Endothelial cell of umbilical vein (primary cell): ENCODE measurements at regions of chr7 and their contacts with region 1.

Region 1: GRCh38 chr7:158863611-158864506 is 7.5 kb downstream of the DYNC2I1 start:
- DNase-seq: peak; percentile 41
- H3K4me3 ChIP-seq: peak overlapping the region; percentile 4 to 54 (median 33)
- H3K27ac ChIP-seq: no peak overlapping the region
- H3K4me1 ChIP-seq: peaks cover 4% of the 10 kb centered on the region
- H3K27me3 ChIP-seq: no peaks in the 10 kb centered on the region
- CTCF ChIP-seq: no peak
- POLR2A ChIP-seq: no peak

Region 2: DNA sequence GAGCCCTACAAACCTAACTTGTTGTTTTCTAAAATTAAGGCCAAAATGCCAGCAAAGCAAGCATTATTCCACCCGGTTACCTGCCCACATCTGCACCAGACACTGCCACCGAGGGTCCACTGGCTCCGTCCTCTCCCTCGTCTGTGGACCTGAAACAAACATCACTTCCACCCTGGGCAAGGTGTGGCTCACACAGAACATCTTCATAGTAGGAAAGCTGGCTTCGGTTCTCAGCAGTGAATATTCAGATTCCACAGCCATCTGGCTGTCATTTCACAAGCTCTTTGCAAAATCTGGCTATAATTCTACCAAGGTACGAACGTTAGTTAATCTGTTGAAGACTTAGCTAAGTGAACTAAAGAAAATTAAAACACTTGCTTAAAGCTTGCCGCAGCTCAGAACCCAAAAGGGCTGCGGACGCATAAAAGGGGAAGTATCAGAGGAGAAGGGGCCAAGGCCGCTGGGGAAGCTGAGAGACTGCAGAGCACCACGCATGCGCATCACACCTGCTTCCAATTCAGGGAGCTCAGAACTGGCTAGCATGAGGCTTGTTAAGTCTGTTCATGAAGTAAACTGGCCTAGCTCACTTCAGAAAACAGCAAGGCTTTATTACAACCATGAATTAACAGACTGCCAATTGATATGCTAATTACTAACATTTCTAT is 322.4 kb before region 1 on chr7:
- CTCF ChIA-PET with region 1: no interaction called
- POLR2A ChIA-PET with region 1: no interaction called
- dilution Hi-C with region 1: no loop called
- intact Hi-C with region 1: no loop called
- DNase-seq: no peak
- H3K4me3 ChIP-seq: no peak overlapping the region
- H3K27ac ChIP-seq: no peak overlapping the region
- H3K4me1 ChIP-seq: no peaks in the 10 kb centered on the region
- H3K27me3 ChIP-seq: no peaks in the 10 kb centered on the region
- CTCF ChIP-seq: no peak
- POLR2A ChIP-seq: no peak

Region 3: DNA sequence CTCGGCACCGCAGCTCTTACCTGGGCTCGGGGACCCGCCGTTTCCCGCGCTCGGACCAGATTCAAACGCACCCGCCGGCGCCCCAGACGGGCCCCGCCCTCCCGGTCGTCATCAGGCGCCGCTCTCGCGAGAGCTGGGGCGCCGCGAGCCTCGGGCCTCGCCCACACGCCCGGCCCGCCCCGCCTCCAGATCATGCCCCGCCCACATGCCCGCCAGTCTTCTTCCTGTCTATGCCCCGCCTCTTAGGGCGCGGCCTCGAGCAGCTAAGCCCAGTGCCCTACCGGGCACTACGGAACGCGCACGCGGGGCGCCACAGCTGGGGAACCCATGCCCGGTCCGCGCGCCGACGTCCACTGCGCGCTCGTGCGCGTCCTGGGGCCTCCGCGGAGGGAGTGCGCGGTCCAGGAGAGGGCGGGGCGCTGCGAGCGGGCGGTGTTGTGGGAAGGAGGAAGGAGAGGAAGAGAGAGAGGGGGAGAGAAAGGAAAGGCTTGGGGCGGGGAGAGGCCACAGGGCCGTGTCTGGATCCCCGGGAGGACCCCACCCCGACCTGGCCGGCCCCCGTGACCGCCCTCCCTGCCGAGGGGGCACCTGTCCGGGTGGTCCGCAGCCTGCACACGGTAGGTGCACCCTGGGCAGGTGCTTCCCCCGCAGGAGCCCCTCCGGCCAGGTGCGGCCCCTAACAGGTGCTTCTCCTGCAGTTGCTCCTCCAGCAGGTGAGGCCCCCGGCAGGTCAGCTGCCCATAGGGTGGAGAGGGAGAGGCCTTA is 159.0 kb before region 1 on chr7 and contains the start of gene NCAPG2:
- CTCF ChIA-PET with region 1: no interaction called
- POLR2A ChIA-PET with region 1: no interaction called
- dilution Hi-C with region 1: no loop called
- intact Hi-C with region 1: loop called (anchors 2 kb)
- DNase-seq: peak; percentile 98
- H3K4me3 ChIP-seq: peak within 1 kb of the TSS; percentile 87 to 100 (median 89)
- H3K27ac ChIP-seq: peak within 1 kb of the TSS; percentile 78
- H3K4me1 ChIP-seq: peaks cover 24% of the 10 kb centered on the region
- H3K27me3 ChIP-seq: no peaks in the 10 kb centered on the region
- CTCF ChIP-seq: no peak
- POLR2A ChIP-seq: peak; percentile 45
- total RNA-seq, gene NCAPG2: 62.3 and 66.9 TPM in 2 replicates

Region 4: GRCh38 chr7:158734861-158735260 is 129.0 kb before region 1 on chr7:
- CTCF ChIA-PET with region 1: no interaction called
- POLR2A ChIA-PET with region 1: no interaction called
- dilution Hi-C with region 1: no loop called
- intact Hi-C with region 1: loop called (anchors 1 kb)
- DNase-seq: peak; percentile 33
- H3K4me3 ChIP-seq: no peak overlapping the region
- H3K27ac ChIP-seq: peak overlapping the region; percentile 49
- H3K4me1 ChIP-seq: peaks cover 8% of the 10 kb centered on the region
- H3K27me3 ChIP-seq: no peaks in the 10 kb centered on the region
- CTCF ChIP-seq: no peak
- POLR2A ChIP-seq: no peak

Region 5: GRCh38 chr7:158903897-158904541 is 40.2 kb after region 1 on chr7:
- CTCF ChIA-PET with region 1: no interaction called
- POLR2A ChIA-PET with region 1: no interaction called
- dilution Hi-C with region 1: no loop called
- intact Hi-C with region 1: no loop called
- DNase-seq: no peak
- H3K4me3 ChIP-seq: no peak overlapping the region
- H3K27ac ChIP-seq: no peak overlapping the region
- H3K4me1 ChIP-seq: no peaks in the 10 kb centered on the region
- H3K27me3 ChIP-seq: no peaks in the 10 kb centered on the region
- CTCF ChIP-seq: no peak
- POLR2A ChIP-seq: no peak

Region 6: GRCh38 chr7:158941796-158942195 is 77.9 kb after region 1 on chr7:
- CTCF ChIA-PET with region 1: no interaction called
- POLR2A ChIA-PET with region 1: no interaction called
- dilution Hi-C with region 1: no loop called
- intact Hi-C with region 1: no loop called
- DNase-seq: no peak
- H3K4me3 ChIP-seq: no peak overlapping the region
- H3K27ac ChIP-seq: no peak overlapping the region
- H3K4me1 ChIP-seq: no peaks in the 10 kb centered on the region
- H3K27me3 ChIP-seq: no peaks in the 10 kb centered on the region
- CTCF ChIP-seq: no peak
- POLR2A ChIP-seq: no peak